CD4-positive, alpha-beta memory T cell (primary cell): ENCODE measurements at regions of chr3 and their contacts with region 1.

Region 1: GRCh38 chr3:157136647-157137387 is 23.1 kb downstream of the CCNL1 start:
- DNase-seq: no peak
- H3K4me3 ChIP-seq: no peak overlapping the region
- H3K4me3 Mint-ChIP-seq: peak overlapping the region in 1 of 8 donors; percentile 81
- H3K27ac ChIP-seq: no peak overlapping the region
- H3K27ac Mint-ChIP-seq: peak overlapping the region in 5 of 7 donors; percentile 30 to 66 (median 61)
- H3K4me1 ChIP-seq: peaks cover 42% of the 10 kb centered on the region
- H3K4me1 Mint-ChIP-seq: peaks cover 19 to 47% (median 38%) of the 10 kb centered on the region in 4 donors
- H3K27me3 ChIP-seq: no peaks in the 10 kb centered on the region
- H3K27me3 Mint-ChIP-seq: no peaks in the 10 kb centered on the region

Region 2: DNA sequence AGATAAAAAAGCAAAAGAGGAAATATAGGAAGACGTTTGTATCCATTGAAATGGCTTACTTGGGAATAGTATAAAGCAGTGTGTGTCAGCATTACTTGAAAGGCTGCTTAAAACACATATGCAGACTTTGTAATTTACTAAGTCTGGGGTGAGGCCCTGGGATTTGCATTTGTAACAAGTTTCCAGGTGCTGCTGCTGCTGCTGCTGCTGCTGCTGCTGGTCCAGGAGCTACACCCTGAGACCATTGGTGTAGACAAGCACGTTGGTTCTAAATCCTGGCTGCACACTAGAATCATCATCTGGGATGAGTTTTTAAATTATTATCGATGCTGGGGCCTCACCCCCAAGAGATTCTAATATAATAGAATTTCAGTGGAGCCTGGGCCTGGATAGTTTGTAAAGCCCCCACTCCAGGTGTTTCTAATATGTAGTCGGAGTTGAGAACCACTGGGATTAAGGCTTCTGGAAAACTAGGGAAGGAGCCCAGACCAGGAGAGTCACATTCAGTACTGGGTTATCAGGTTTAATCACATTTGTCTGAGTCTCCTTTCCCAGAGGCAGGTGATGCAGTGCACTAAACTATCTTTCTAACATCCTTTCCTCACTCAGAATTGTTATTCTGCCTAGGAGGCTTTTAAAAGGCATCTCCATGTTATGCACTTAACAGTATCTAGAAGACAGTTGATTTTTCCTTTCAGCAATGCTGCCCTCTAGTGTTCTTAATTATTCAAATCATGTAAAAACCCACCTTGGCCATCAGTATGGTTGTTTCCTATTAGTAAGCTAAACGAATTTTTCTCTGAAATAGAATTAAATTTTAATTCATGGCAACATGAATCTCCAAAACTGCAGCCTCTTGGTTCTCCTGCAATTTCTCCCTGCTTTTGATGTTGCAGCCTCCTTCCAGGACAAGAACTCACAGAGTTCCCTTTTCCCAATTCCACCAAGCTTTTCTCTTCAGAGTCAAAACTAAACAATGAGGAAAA is 627.3 kb before region 1 on chr3:
- CTCF ChIA-PET with region 1: interaction called, 31 read pairs
- POLR2A ChIA-PET with region 1: no interaction called
- intact Hi-C with region 1: loop called (anchors 2 kb)
- DNase-seq: peak in 4 of 5 donors; percentile 56 to 68 (median 62)
- H3K4me3 ChIP-seq: no peak overlapping the region
- H3K4me3 Mint-ChIP-seq: no peak overlapping the region
- H3K27ac ChIP-seq: no peak overlapping the region
- H3K27ac Mint-ChIP-seq: no peak overlapping the region
- H3K4me1 ChIP-seq: no peaks in the 10 kb centered on the region
- H3K4me1 Mint-ChIP-seq: peaks cover 0 to 17% (median 8%) of the 10 kb centered on the region in 4 donors
- H3K27me3 ChIP-seq: no peaks in the 10 kb centered on the region
- H3K27me3 Mint-ChIP-seq: peaks cover 2 to 3% of the 10 kb centered on the region in 2 donors

Region 3: GRCh38 chr3:156554842-156555687 is 581.8 kb before region 1 on chr3 and contains the start of gene SSR3:
- CTCF ChIA-PET with region 1: interaction called, 15 read pairs
- POLR2A ChIA-PET with region 1: interaction called, 12 read pairs
- intact Hi-C with region 1: no loop called
- DNase-seq: peak; percentile 97 to 99 (median 99)
- H3K4me3 ChIP-seq: peak within 1 kb of the TSS; percentile 67 to 97
- H3K4me3 Mint-ChIP-seq: peak within 1 kb of the TSS; percentile 89 to 99 (median 98)
- H3K27ac ChIP-seq: peak within 1 kb of the TSS; percentile 72
- H3K27ac Mint-ChIP-seq: peak within 1 kb of the TSS; percentile 94 to 98 (median 95)
- H3K4me1 ChIP-seq: peaks cover 40% of the 10 kb centered on the region
- H3K4me1 Mint-ChIP-seq: peaks cover 31 to 55% (median 42%) of the 10 kb centered on the region in 4 donors
- H3K27me3 ChIP-seq: no peaks in the 10 kb centered on the region
- H3K27me3 Mint-ChIP-seq: peaks cover 0 to 5% of the 10 kb centered on the region in 2 donors
- total RNA-seq, gene SSR3: 132 to 138 TPM

Region 4: DNA sequence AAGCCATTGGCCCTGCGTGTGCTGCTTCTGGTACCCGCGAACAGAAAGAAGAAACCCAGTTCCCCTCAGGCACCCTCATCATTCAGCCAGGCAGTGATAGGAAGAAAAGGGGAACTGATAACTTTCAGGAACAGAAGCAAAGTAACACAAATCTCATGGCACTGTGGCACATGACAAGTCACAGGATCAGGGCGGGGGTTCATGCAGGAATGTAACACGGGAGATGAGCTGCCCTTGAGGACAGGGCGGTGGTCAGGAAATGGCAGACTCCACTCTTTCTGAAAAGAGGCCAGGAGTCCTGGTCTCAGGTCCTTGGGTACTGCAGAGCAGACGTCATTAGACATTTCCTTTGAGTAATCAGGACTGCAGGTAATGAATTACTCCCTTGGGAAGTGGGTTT is 72.4 kb before region 1 on chr3:
- CTCF ChIA-PET with region 1: interaction called, 10 read pairs
- POLR2A ChIA-PET with region 1: no interaction called
- intact Hi-C with region 1: no loop called
- DNase-seq: no peak
- H3K4me3 ChIP-seq: no peak overlapping the region
- H3K4me3 Mint-ChIP-seq: no peak overlapping the region
- H3K27ac ChIP-seq: no peak overlapping the region
- H3K27ac Mint-ChIP-seq: peak overlapping the region in 3 of 7 donors; percentile 39 to 70 (median 42)
- H3K4me1 ChIP-seq: peaks cover 38% of the 10 kb centered on the region
- H3K4me1 Mint-ChIP-seq: peaks cover 23 to 45% (median 36%) of the 10 kb centered on the region in 4 donors
- H3K27me3 ChIP-seq: no peaks in the 10 kb centered on the region
- H3K27me3 Mint-ChIP-seq: peaks cover 0 to 2% of the 10 kb centered on the region in 2 donors

Region 5: GRCh38 chr3:157113832-157114505 is 22.8 kb before region 1 on chr3:
- CTCF ChIA-PET with region 1: interaction called, 15 read pairs
- POLR2A ChIA-PET with region 1: no interaction called
- intact Hi-C with region 1: no loop called
- DNase-seq: no peak
- H3K4me3 ChIP-seq: no peak overlapping the region
- H3K4me3 Mint-ChIP-seq: no peak overlapping the region
- H3K27ac ChIP-seq: no peak overlapping the region
- H3K27ac Mint-ChIP-seq: peak overlapping the region in 2 of 7 donors; percentile 15 to 32
- H3K4me1 ChIP-seq: no peaks in the 10 kb centered on the region
- H3K4me1 Mint-ChIP-seq: peaks cover 0 to 4% (median 0%) of the 10 kb centered on the region in 4 donors
- H3K27me3 ChIP-seq: no peaks in the 10 kb centered on the region
- H3K27me3 Mint-ChIP-seq: peaks cover 0 to 4% of the 10 kb centered on the region in 2 donors

Region 6: DNA sequence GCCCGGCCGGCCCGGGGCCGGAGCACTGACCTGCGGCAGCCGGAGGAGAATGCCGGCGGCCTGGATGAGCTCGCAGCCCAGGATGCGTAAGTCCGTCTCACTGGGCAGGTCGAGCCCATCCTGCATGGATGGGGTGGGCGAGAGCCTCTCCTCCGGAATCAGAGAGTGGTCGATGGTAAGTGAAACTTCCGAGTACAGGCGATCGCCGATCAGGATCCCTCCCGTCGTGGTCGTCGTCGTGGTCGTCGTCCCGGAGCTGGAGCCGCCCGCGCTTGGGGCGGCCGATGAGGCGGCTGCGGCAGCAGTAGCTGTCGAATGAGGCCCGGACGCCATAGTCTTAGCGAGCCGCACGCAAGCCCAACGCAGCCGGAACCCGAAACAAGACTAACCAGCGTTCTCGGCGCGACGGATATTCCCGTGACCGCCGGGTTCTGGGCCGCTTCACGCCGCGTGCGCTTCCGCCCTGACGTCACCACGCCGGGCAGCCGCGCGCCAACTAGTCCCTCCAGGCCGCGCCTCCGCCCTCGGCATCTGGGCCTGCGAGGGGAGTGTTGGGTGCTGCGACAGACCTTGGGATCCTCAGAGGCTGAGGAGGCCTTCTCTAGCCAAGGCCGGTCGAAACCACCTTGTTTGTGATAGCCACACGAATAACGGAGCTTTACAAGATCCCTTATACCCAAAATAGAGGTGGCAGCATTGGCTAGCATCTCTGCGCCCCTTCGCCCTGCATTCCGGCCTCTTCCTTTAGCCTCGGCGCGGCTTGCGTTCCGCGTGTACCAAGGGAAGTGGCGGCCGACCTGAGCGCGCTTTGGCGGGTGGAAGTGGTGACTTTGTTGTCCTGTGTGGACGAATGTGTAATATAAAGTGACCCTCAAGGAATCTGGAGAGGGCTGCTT is 23.2 kb after region 1 on chr3 and contains the start of gene CCNL1:
- CTCF ChIA-PET with region 1: interaction called, 22 read pairs
- POLR2A ChIA-PET with region 1: interaction called, 22 read pairs
- intact Hi-C with region 1: no loop called
- DNase-seq: peak; percentile 93 to 97 (median 96)
- H3K4me3 ChIP-seq: peak within 1 kb of the TSS; percentile 87 to 97
- H3K4me3 Mint-ChIP-seq: peak within 1 kb of the TSS; percentile 92 to 99 (median 96)
- H3K27ac ChIP-seq: peak within 1 kb of the TSS; percentile 100
- H3K27ac Mint-ChIP-seq: peak within 1 kb of the TSS; percentile 99 to 100 (median 100)
- H3K4me1 ChIP-seq: peaks cover 57% of the 10 kb centered on the region
- H3K4me1 Mint-ChIP-seq: peaks cover 37 to 64% (median 51%) of the 10 kb centered on the region in 4 donors
- H3K27me3 ChIP-seq: no peaks in the 10 kb centered on the region
- H3K27me3 Mint-ChIP-seq: no peaks in the 10 kb centered on the region
- total RNA-seq, gene CCNL1: 327 to 330 TPM